ENCODE measurements at regions of chr11 and their contacts with region 1.

Region 1: DNA sequence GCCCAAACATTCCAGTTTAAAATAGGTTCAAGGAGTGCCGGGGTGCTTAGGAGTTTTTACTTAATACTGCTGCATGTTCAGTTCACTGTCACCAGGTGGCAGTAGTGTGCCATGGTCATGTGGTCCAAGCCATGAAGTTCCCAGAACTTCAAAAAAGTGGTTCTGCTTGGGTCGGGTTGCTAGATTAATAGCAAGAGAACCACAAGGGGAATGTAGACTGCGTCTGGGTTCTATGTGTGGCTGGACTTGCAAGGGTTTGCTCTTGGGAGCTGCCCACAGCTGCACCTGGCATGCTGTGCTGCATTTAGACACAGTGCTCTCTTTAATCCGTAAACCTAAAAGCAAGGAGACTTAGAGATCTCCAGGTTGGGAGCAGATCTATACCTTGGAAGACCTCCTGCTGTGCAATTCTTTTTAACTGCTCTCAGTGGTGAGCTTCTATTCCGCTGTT is 6.5 kb upstream of the SPON1 start:
- DNase-seq: peak in 3 of 4 donors; percentile 45 to 82 (median 61)
- ATAC-seq: peak; percentile 95
- H3K4me3 ChIP-seq: no peak overlapping the region
- H3K27ac ChIP-seq: no peak overlapping the region
- H3K4me1 ChIP-seq: no peaks in the 10 kb centered on the region
- H3K27me3 ChIP-seq: peaks cover 0 to 34% of the 10 kb centered on the region in 2 donors
- CTCF ChIP-seq: peak; percentile 74 to 88

Region 2: GRCh38 chr11:13577881-13578280 is 378.1 kb before region 1 on chr11:
- intact Hi-C with region 1: no loop called
- DNase-seq: no peak
- ATAC-seq: no peak
- H3K4me3 ChIP-seq: no peak overlapping the region
- H3K27ac ChIP-seq: no peak overlapping the region
- H3K4me1 ChIP-seq: no peaks in the 10 kb centered on the region
- H3K27me3 ChIP-seq: no peaks in the 10 kb centered on the region
- CTCF ChIP-seq: no peak

Region 3: GRCh38 chr11:14148653-14149273 is 192.8 kb after region 1 on chr11:
- intact Hi-C with region 1: loop called in 1 of 2 experiments (anchors 5 kb)
- DNase-seq: peak in 2 of 4 donors; percentile 24 to 25
- ATAC-seq: peak; percentile 84
- H3K4me3 ChIP-seq: no peak overlapping the region
- H3K27ac ChIP-seq: no peak overlapping the region
- H3K4me1 ChIP-seq: peaks cover 0 to 3% of the 10 kb centered on the region in 2 donors
- H3K27me3 ChIP-seq: no peaks in the 10 kb centered on the region
- CTCF ChIP-seq: peak; percentile 31 to 36

Region 4: GRCh38 chr11:14249121-14249963 is 293.3 kb after region 1 on chr11:
- intact Hi-C with region 1: loop called in 1 of 2 experiments (anchors 5 kb)
- DNase-seq: peak in 3 of 4 donors; percentile 57 to 73 (median 59)
- ATAC-seq: peak; percentile 78
- H3K4me3 ChIP-seq: no peak overlapping the region
- H3K27ac ChIP-seq: no peak overlapping the region
- H3K4me1 ChIP-seq: peaks cover 7 to 8% of the 10 kb centered on the region in 2 donors
- H3K27me3 ChIP-seq: peaks cover 0 to 17% of the 10 kb centered on the region in 2 donors
- CTCF ChIP-seq: peak; percentile 68 to 80